ENCODE measurements at regions of chr11 and their contacts with region 1.

Region 1: DNA sequence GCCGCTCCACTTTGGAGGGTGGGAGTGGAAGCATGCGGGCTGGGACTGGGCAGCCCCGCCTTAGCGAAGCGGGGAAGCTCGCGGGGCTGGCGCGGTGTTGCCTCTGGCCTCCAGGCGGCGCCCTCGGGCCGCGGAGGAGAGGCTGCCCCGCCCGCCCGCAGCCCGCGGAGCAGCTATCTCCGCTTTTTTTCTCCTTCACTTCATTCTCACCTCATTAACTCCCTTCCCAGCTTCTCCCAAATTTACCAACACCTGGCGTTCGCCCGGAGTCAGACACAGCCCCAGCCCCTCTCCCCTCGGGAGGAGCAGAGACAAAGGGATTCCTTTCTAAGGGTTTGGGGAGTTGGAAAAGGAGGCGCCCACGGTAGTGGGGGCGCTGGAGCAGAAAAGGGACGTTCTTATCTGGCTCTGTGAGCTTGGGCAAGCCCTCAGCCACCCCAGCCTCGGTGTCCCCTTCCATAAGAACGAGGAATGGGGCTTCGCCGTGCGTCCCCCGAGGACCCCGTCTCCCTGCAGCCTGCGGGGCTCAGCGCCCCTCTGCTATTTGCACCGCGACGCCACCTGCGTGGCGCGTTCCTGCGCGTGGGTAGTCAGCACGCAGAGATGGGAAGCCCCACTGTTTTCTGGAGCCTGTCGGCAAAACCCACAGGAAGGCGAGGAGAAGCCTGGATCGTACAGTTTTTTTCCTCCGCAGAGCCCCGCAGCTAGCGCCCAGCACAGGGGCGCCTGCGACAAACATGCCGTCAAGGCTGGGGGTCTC is 1.5 kb upstream of the WNT11 start:
- DNase-seq: peak; percentile 93
- CTCF ChIP-seq: peak; percentile 93

Region 2: DNA sequence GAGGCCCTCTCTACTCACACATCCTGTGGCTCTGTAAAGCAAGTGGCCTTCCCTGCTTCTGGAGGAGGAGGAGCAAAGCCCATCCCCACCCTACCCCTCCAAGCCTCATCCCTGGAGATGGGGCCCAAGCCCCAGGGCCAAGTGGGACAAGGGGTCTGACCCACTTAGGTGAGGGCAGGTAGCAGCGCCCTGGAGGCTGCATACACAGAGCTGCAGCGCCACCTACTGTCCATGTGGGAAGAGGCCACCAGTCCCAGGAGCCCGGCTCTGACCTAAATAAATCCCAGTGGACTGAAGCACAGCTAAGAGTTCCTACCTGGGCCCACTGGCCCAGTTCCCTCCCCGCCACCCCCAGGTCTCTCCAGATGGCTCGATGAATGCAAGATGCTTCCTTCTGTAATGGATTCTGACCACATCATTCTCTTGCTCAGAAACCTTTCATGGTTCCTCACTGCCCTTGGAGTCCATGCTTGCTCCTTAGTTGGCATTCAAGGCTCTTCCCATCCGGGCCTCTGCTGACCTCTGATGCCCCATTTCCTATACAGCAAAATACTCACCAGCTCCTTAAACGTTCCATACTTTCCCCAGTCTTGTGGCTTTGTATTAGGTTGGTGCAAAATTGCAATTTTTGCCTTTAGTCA is 111.0 kb after region 1 on chr11:
- in situ Hi-C with region 1: loop called (anchors 10 kb)
- DNase-seq: peak; percentile 88
- CTCF ChIP-seq: peak; percentile 94

Region 3: DNA sequence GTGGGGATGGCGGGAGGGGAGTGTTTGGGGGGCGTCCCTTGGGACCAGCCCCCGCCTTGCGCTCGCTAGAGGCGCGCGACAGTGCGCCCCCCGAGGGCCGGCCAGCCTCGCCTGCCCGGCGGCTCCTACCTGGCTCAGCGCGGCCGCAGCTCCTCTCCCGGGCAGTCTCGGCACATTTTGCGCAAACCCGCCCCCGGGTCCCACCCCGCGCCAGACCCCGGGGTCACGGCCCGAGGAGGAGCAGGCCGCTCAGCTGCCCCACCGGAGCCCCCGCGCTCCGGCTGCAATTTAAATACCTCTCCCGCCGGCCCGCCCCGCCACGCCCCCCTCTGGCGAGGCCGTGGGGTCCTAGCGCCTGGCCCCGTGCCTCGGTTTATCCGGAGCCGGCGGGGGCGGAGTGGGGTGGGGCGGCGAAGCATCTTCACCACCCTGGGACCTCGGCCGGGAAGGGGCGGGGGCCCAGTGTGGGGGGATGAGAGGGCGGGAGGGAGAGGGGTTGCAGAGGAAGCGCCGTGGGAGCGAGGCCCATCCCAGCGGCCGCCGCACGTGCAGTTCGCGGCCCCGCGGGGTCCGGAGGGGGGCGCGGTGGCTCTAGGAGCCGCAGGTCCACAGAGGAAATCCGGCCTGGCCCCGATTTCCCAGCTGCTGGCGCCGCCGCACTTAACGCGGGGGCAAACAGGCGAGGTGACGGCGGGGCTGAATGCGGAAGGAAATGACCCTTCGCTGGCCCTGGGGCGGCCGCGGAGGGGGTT is 462.8 kb after region 1 on chr11 and contains the start of gene LRRC32:
- in situ Hi-C with region 1: loop called (anchors 25 kb)
- DNase-seq: no peak
- CTCF ChIP-seq: peak; percentile 14